ENCODE measurements at regions of chr20 and their contacts with region 1.

Region 1: DNA sequence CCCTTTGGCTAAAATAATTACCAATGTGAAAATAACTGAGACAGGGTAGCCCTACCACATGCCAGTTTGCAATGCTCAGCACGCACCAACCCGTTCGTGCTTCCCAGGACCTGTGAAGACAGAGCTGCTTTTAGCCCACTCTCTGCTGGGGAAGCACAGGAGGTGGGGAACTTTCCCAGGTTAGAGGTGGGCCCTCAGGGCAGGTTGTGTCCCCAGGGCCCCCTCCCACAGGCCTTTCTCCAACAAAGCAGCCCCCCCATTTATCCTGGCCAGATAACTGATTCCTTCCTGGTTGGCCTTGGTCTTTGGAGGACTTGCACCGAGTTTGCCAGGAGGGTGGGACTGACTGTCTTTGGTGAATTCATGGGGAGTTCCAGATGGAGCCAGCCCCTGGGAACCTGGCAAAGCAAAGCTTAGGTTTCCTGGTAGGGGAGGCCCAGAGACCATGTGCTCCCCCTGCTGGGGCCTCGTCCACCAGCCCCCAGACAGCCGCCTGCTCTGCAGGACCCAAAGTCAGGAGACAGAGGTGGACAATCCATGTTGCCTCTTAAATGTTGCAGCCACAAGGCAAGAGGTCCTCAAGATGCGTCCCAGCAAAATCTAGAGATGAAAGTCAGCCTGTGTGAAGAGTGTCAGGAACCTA is 498.0 kb downstream of the PREX1 start:
- DNase-seq: no peak
- ATAC-seq: peak in 4 of 8 donors; percentile 24 to 55 (median 41)
- H3K4me3 ChIP-seq: no peak overlapping the region
- H3K27ac ChIP-seq: no peak overlapping the region
- H3K4me1 ChIP-seq: peaks cover 0 to 24% (median 12%) of the 10 kb centered on the region in 9 donors
- H3K27me3 ChIP-seq: peaks cover 0 to 6% (median 0%) of the 10 kb centered on the region in 7 donors
- CTCF ChIP-seq: peak in 8 of 9 donors; percentile 12 to 53 (median 36)

Region 2: GRCh38 chr20:48070991-48071652 is 258.6 kb before region 1 on chr20:
- intact Hi-C with region 1: loop called in 1 of 10 experiments (anchors 5 kb)
- DNase-seq: no peak
- ATAC-seq: no peak
- H3K4me3 ChIP-seq: no peak overlapping the region
- H3K27ac ChIP-seq: no peak overlapping the region
- H3K4me1 ChIP-seq: no peaks in the 10 kb centered on the region
- H3K27me3 ChIP-seq: peaks cover 0 to 36% (median 5%) of the 10 kb centered on the region in 7 donors
- CTCF ChIP-seq: no peak

Region 3: DNA sequence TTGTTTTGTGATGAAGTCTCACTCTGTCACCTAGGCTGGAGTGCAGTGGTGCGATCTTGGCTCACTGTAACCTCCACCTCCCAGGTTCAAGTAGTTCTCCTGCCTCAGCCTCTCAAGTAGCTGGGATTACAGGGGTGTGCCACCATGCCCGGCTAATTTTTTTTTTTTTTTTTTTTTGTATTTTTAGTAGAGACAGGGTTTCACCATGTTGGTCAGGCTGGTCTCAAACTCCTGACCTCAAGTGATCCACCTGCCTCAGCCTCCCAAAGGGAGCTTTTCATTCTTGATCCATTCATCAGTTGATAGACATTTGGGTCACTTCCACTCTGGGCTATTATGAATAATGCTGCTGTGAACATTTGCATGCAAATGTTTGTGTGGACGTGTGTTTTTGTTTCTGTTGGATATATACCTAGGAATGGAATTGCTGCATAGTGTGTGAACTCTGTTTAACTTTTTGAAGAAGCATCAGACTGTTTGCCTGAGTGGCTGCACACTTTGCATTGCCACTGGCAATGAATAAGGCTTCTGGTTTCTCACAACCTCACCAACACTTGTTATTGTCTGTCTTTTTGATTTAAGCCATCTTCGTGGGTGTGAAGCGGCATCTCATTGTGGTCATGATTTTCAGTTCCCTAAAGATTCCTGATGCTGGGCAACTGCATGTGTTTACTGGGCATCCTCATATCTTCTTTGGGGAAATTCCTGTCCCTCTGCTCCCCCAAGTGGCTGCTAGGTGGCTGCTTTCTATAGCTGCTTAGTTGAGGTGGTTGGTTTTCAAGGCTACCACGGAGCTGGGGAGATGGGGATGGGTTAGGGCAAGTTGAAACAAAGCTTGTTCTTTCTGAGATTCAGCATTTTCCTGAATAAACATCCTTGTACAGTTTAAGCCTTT is 140.9 kb before region 1 on chr20:
- intact Hi-C with region 1: no loop called
- DNase-seq: no peak
- ATAC-seq: no peak
- H3K4me3 ChIP-seq: no peak overlapping the region
- H3K27ac ChIP-seq: no peak overlapping the region
- H3K4me1 ChIP-seq: no peaks in the 10 kb centered on the region
- H3K27me3 ChIP-seq: peaks cover 0 to 3% (median 0%) of the 10 kb centered on the region in 7 donors
- CTCF ChIP-seq: peak in 6 of 9 donors; percentile 11 to 46 (median 14)

Region 4: DNA sequence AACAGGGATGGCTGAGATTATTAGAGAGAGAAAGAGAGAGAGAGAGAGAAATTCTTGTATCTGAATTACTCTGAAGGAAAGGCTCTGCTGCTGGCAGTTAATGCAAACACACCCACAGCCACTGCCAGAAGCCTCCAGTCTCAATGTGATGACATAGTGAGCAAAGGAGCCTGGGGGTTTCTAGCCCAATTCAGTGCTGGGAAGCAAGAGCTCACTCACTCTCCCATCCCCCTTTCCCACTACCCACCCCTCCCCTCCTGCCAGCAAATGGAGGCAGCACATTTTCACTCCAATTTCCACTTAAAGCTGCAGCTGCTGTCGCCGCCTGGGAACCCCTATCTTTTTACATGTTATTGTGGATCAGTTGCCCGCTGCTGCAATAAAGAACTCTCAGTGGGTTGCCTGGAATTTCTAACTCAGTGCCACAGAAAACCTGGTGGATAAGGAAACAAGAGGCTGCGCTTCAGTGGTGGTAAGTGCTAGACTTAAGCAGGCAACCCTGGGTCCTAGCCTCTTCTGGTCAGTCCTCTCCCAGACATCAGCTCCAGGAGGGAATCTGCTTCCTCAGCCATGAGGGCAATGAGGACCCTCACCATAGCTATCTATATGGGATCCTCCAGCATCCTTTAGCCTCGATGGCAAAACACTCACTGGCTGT is 53.9 kb before region 1 on chr20:
- intact Hi-C with region 1: no loop called
- DNase-seq: no peak
- ATAC-seq: peak in 1 of 8 donors; percentile 32
- H3K4me3 ChIP-seq: no peak overlapping the region
- H3K27ac ChIP-seq: peak overlapping the region in 1 of 10 donors; percentile 35
- H3K4me1 ChIP-seq: peaks cover 0 to 55% (median 10%) of the 10 kb centered on the region in 9 donors
- H3K27me3 ChIP-seq: peaks cover 0 to 12% (median 0%) of the 10 kb centered on the region in 7 donors
- CTCF ChIP-seq: no peak